ENCODE measurements at regions of chr2 and their contacts with region 1.

Region 1: GRCh38 chr2:207769597-207770486 is at the start of gene FZD5:
- DNase-seq: peak; percentile 99
- H3K4me3 Mint-ChIP-seq: peak within 1 kb of the TSS; percentile 82
- H3K27ac Mint-ChIP-seq: peak within 1 kb of the TSS; percentile 83
- H3K4me1 Mint-ChIP-seq: peaks cover 37% of the 10 kb centered on the region
- H3K27me3 Mint-ChIP-seq: no peaks in the 10 kb centered on the region
- CTCF ChIP-seq: peak; percentile 80
- total RNA-seq, gene FZD5: 20.4 and 22.2 TPM in 2 replicates

Region 2: GRCh38 chr2:207692206-207693065 is 77.4 kb before region 1 on chr2:
- CTCF ChIA-PET with region 1: no interaction called
- intact Hi-C with region 1: no loop called
- DNase-seq: peak; percentile 44
- H3K4me3 Mint-ChIP-seq: no peak overlapping the region
- H3K27ac Mint-ChIP-seq: no peak overlapping the region
- H3K4me1 Mint-ChIP-seq: no peaks in the 10 kb centered on the region
- H3K27me3 Mint-ChIP-seq: peaks cover 11% of the 10 kb centered on the region
- CTCF ChIP-seq: peak; percentile 53

Region 3: DNA sequence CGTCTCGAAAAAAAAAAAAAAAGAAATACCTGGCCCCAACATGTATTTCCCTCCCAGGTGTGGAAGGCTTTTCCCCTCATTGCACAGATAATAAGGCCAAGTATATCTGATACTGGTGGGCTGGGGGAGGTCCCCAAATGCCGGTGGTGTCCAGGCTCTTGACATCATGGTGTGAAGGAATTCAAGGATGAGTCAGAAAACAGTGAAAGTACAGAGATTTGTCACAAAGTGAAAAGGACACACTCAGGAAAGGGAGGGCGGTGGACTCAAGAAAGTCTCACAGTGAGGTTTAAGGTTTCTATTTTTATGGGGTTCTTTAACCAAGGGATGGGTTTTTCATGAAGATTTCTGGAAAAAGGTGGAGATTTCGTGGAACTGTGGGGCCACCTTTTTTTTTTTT is 37.7 kb after region 1 on chr2:
- CTCF ChIA-PET with region 1: interaction called, 5 read pairs
- intact Hi-C with region 1: loop called (anchors 2 kb)
- DNase-seq: no peak
- H3K4me3 Mint-ChIP-seq: no peak overlapping the region
- H3K27ac Mint-ChIP-seq: no peak overlapping the region
- H3K4me1 Mint-ChIP-seq: peaks cover 41% of the 10 kb centered on the region
- H3K27me3 Mint-ChIP-seq: no peaks in the 10 kb centered on the region
- CTCF ChIP-seq: no peak

Region 4: DNA sequence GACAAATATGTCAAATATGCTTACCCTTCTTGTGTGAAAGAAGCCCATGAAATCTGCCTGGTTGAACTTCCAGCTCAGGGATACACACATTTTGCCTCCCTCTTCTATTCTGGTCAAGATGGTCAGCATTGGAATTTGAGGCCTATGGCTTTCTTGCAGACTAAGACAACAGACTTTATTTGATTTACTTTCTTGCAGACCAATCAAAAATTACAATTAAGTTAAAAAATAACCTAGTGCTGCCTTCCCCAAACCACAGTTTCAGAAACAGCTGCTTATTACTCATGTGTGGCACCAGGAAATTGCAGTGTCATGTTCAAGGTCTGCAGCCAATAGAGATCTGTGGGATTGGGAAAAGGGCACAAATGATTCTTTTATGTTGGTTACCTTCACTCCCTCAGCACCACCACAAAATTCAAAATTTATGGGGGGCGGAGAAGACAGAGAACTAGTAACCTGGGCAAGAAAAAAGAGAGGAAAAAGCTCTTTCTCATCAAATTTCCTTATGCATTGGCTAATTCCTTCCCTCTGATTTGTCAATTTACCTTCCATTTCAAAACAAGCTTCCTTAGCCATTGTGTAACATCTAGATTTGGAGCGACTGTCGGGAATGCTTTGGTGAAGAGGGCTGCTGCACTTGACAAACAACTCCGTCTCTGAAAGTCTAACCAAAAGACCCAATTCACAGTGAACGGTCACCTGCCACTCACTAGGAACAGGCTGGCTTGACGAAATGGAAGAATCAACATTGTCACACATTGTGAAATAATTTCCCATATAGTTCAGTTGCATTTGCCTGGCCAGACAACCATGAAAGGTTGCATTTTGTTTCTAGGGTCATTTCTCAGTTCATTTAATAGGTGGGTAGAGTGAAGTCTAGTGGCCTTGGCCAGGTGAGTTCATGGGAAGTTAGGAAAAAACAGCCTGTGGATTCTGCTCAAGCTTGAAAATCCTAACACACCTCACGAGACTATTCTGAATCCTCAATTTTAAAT is 100.2 kb after region 1 on chr2:
- CTCF ChIA-PET with region 1: no interaction called
- intact Hi-C with region 1: loop called (anchors 5 kb)
- DNase-seq: peak; percentile 35
- H3K4me3 Mint-ChIP-seq: peak overlapping the region; percentile 9
- H3K27ac Mint-ChIP-seq: peak overlapping the region; percentile 83
- H3K4me1 Mint-ChIP-seq: peaks cover 42% of the 10 kb centered on the region
- H3K27me3 Mint-ChIP-seq: no peaks in the 10 kb centered on the region
- CTCF ChIP-seq: no peak

Region 5: GRCh38 chr2:207974216-207974605 is 204.4 kb after region 1 on chr2:
- CTCF ChIA-PET with region 1: interaction called, 9 read pairs
- intact Hi-C with region 1: loop called (anchors 1 kb)
- DNase-seq: peak; percentile 4
- H3K4me3 Mint-ChIP-seq: no peak overlapping the region
- H3K27ac Mint-ChIP-seq: no peak overlapping the region
- H3K4me1 Mint-ChIP-seq: peaks cover 30% of the 10 kb centered on the region
- H3K27me3 Mint-ChIP-seq: no peaks in the 10 kb centered on the region
- CTCF ChIP-seq: no peak

Measured in Calu3 (cell line).